Lower leg skin (tissue), 4 donors: ENCODE measurements at regions of chr14 and their contacts with region 1.

Region 1: DNA sequence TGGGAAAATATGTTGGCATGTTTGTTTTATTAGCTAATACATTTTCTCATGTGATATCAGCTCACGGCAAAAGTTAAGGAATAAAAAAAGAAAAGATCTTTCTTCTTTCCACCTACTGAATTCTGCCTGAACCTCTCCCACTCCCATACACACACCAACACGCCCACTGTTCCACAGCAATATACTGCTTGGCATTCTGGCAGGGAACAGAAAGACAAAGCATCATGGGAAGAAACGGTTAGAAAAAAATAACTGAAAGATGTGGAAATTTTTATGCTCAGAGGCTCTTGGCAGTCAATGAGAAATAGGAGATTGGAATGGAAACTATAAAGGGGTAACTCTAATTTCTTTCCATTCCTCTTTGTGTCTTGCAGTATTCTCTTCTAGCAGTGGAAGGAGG is 268.5 kb downstream of the FOXG1 start:
- DNase-seq: no peak
- H3K4me3 ChIP-seq: no peak overlapping the region
- CTCF ChIP-seq: no peak
- POLR2A ChIP-seq: no peak

Region 2: DNA sequence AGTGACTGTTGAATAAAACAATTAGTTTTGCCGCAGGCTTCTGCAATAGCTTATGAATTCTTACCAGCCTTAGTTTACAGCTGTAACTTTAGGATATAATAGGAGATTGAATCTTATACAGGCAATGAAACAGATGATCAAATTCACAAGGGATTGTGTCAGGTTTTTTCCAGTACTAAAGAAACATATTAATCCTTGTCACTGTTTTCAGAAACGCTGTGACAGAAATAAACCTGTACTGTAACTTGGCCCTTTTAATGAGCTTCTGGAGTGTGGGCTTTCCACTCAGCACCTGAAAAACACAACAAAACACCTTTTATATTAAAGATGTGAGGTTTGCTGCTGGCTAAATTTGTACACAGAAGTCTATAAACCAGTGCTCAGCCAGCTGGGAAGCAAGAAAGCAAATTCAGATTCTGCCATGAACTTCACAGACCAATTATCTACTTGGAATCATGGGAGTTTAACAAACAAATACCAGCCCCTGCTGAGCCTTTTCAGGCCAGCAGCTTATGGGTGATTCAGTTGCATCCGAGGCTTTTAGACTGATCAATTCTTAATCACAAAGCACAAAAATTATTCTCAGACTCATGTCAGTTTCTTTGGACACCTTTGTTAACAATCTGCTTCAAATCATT is 159.1 kb before region 1 on chr14:
- intact Hi-C with region 1: no loop called
- DNase-seq: no peak
- H3K4me3 ChIP-seq: no peak overlapping the region
- CTCF ChIP-seq: no peak
- POLR2A ChIP-seq: no peak

Region 3: DNA sequence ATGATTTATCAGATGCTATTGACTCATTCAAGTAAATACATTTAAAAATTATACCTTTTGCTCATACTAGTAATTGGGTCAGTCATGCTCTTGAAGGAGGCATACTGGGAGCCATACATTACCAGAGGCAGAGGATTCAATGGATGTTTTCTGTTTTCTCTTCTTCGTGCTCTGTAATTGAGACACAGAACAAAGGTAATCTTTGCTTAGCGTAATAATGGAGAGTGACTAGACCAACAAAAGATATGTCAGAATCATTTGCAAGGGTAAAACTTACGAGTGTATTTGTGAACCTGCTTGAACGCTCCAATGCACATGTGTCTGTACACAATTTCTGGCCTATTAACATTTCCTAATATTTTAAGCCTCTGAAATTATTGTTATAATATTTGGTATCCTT is 27.8 kb after region 1 on chr14:
- intact Hi-C with region 1: loop called (anchors 1 kb)
- DNase-seq: no peak
- H3K4me3 ChIP-seq: no peak overlapping the region
- CTCF ChIP-seq: no peak
- POLR2A ChIP-seq: no peak